ENCODE measurements at regions of chr17 and their contacts with region 1.

Region 1: GRCh38 chr17:7572588-7573323 is 6.7 kb upstream of the CD68 start:
- DNase-seq: peak; percentile 97
- H3K4me3 ChIP-seq: peak overlapping the region; percentile 100
- H3K27me3 ChIP-seq: no peaks in the 10 kb centered on the region
- CTCF ChIP-seq: 0 out of 2 replicates have a peak, but pooled peaks have one; percentile 2

Region 2: DNA sequence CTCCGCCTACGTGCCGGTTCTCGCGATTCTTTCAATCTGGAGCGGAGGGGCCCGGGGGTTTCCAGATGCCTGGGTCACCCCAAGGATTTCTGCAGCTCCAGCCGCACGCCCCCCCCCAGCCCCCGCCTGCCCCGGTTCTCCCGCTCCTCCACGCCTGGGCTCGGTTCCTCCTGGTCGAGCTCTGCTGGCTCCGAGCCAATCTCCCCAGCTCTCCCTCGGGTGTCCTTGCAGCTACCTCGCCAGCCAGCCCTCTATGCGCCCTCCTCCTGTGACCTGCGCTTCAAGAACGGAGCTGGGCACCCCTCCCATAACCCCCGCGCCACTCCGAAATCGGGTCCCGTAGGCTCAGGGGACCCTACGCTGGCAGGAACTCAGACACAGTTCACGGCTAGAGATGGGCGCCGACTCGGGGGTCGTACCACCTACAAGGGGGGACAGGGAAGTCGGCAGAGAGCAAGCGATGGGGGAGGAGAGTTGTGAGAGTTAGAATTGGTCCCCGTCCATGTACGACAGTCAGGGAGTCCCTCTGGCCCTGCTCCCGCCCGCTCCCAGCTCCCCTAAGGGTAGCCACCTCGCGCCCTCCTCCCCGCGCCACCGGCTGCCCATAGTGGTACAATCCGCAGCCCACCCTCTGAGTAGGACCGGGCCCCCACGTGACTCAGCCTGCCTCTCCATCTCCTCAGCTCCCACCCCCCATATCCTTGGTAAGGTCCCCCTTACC is 132.5 kb before region 1 on chr17:
- CTCF ChIA-PET with region 1: interaction called, 8 read pairs
- POLR2A ChIA-PET with region 1: interaction called, 18 read pairs
- DNase-seq: no peak
- H3K4me3 ChIP-seq: peak overlapping the region; percentile 38
- H3K27me3 ChIP-seq: peaks cover 23% of the 10 kb centered on the region
- CTCF ChIP-seq: no peak

Region 3: GRCh38 chr17:7541074-7541621 is 31.6 kb before region 1 on chr17:
- CTCF ChIA-PET with region 1: no interaction called
- POLR2A ChIA-PET with region 1: no interaction called
- DNase-seq: no peak
- H3K4me3 ChIP-seq: no peak overlapping the region
- H3K27me3 ChIP-seq: peaks cover 2% of the 10 kb centered on the region; the same call in 1 of the 2 replicates
- CTCF ChIP-seq: no peak

Region 4: GRCh38 chr17:7552621-7553051 is 20.1 kb before region 1 on chr17:
- CTCF ChIA-PET with region 1: no interaction called
- POLR2A ChIA-PET with region 1: no interaction called
- DNase-seq: no peak
- H3K4me3 ChIP-seq: no peak overlapping the region
- H3K27me3 ChIP-seq: no peaks in the 10 kb centered on the region
- CTCF ChIP-seq: no peak

Region 5: DNA sequence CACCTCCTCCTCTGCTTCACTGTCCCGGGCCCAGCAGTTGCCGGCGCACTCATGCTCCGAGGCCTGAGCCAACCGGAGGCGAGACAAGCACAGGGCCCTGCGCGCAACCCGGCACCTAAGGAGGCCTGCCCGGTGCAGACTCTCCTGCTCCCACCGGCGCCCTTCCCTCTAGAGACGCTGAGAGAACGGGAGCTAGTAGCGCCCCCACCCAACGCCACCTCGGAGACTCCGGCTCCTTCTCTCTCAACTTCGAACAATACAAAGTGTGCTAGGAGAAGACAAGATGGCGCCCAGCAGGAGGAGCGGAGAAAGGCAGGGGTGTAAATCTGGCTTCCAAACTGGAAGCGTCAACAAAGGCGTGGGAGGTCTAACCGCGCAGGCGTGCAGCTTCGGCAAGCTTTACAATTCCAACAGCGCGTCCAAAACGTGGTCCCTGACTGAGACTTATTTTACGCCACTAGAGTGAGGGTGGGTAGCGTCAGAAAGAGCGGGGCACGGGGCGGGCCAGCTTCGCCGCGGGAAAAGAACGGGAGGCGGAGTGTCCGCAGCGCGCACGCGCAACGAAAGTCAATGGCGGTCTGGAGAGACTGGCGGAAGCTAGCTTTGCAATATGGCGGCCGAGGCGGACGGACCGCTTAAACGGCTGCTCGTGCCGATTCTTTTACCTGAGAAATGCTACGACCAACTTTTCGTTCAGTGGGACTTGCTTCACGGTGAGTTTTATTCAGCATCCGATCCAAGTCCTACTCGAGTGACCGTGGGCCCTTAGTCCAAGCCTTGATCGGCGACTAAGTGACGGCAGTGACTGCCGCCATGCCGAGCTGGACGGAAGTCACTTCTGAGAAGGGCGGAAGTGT is 10.7 kb after region 1 on chr17 and contains the start of gene MPDU1:
- CTCF ChIA-PET with region 1: interaction called, 29 read pairs
- POLR2A ChIA-PET with region 1: interaction called, 16 read pairs
- DNase-seq: peak; percentile 87
- H3K4me3 ChIP-seq: peak within 1 kb of the TSS; percentile 71
- H3K27me3 ChIP-seq: no peaks in the 10 kb centered on the region
- CTCF ChIP-seq: no peak
- polyA plus RNA-seq, gene MPDU1: 142 and 174 TPM in 2 replicates

Region 6: GRCh38 chr17:8393420-8394241 is 820.9 kb after region 1 on chr17:
- CTCF ChIA-PET with region 1: no interaction called
- POLR2A ChIA-PET with region 1: no interaction called
- DNase-seq: no peak
- H3K4me3 ChIP-seq: no peak overlapping the region
- H3K27me3 ChIP-seq: peaks cover 9% of the 10 kb centered on the region
- CTCF ChIP-seq: no peak